PC-9 (cell line): ENCODE measurements at regions of chr2 and their contacts with region 1.

Region 1: DNA sequence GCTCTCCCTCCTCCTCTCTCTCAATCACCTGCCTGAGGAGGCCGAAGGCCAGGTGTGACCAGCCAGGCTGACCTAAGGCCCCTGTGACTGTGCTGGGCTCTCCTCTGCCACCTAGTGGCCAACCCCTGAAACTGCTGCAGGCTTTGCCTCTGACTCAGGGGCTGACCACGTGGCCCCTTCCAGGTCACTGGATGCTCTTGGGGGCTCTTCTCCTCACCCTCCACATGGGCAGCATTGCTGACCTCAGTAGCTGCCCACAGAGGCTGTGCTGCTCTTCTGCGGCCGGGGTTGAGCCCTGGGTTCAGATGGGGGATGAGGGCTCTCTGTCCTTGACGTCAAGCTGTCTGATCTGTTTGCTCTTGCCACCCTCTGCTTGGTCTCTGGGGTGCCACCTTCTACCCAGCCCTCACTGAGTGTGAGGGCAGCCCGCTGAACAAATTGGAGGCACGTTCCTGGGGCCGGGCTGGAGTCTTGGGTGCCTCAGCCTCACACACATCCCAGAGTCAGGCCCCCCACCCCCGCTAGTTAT is 122.7 kb downstream of the TWIST2 start:
- DNase-seq: peak in 1 of 2 experiments; percentile 84
- H3K4me3 ChIP-seq: no peak overlapping the region
- H3K27ac ChIP-seq: no peak overlapping the region
- H3K4me1 ChIP-seq: no peaks in the 10 kb centered on the region
- H3K27me3 ChIP-seq: peaks cover 45% of the 10 kb centered on the region
- CTCF ChIP-seq: peak; percentile 100

Region 2: GRCh38 chr2:238352361-238352760 is 618.3 kb before region 1 on chr2:
- CTCF ChIA-PET with region 1: no interaction called
- POLR2A ChIA-PET with region 1: no interaction called
- intact Hi-C with region 1: loop called (anchors 10 kb)
- DNase-seq: no peak
- H3K4me3 ChIP-seq: no peak overlapping the region
- H3K27ac ChIP-seq: no peak overlapping the region
- H3K4me1 ChIP-seq: 0 out of 2 replicates have a peak, but pooled peaks cover 4% of the 10 kb centered on the region
- H3K27me3 ChIP-seq: no peaks in the 10 kb centered on the region
- CTCF ChIP-seq: no peak

Region 3: DNA sequence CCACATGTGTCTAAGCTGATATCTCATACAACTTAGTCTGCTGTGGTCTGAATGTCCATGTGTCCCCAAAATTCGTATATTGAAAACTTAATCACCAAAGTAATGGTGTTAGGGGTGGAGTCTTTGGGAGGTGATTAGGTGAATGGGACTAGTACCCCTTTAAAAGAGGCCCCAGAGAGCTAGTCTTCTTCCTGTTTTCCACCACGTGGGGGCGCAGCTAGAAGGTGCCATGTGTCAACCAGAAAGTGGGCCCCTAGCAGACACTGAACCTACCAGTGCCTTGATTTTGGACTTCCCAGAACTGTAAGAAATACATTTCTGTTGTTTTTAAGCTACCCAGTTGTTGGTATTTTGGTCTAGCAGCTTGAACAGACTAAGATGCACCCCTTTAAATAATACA is 457.3 kb before region 1 on chr2:
- CTCF ChIA-PET with region 1: interaction called, 7 read pairs
- POLR2A ChIA-PET with region 1: no interaction called
- intact Hi-C with region 1: loop called (anchors 1 kb)
- DNase-seq: peak in 1 of 2 experiments; percentile 62
- H3K4me3 ChIP-seq: no peak overlapping the region
- H3K27ac ChIP-seq: no peak overlapping the region
- H3K4me1 ChIP-seq: no peaks in the 10 kb centered on the region
- H3K27me3 ChIP-seq: peaks cover 76% of the 10 kb centered on the region
- CTCF ChIP-seq: peak; percentile 77

Region 4: DNA sequence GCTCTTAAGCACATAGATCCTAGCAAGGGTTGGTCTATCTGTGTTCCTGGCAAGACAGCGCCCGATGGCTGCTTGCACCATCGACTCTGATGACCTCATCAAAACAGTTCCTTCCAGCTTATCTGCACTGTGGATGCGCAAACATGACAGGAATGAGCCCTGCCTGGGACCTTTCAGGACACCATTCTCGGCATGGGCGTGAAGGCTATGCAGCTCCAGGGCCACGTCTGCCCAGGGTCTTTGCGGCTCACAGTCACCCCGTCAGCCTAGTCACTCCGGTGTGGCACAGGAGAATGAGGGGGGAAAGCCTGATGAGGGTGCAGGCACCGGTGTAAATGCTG is 270.5 kb before region 1 on chr2:
- CTCF ChIA-PET with region 1: no interaction called
- POLR2A ChIA-PET with region 1: no interaction called
- intact Hi-C with region 1: no loop called
- DNase-seq: peak in 1 of 2 experiments; percentile 75
- H3K4me3 ChIP-seq: no peak overlapping the region
- H3K27ac ChIP-seq: no peak overlapping the region
- H3K4me1 ChIP-seq: no peaks in the 10 kb centered on the region
- H3K27me3 ChIP-seq: peaks cover 87% of the 10 kb centered on the region
- CTCF ChIP-seq: no peak

Region 5: DNA sequence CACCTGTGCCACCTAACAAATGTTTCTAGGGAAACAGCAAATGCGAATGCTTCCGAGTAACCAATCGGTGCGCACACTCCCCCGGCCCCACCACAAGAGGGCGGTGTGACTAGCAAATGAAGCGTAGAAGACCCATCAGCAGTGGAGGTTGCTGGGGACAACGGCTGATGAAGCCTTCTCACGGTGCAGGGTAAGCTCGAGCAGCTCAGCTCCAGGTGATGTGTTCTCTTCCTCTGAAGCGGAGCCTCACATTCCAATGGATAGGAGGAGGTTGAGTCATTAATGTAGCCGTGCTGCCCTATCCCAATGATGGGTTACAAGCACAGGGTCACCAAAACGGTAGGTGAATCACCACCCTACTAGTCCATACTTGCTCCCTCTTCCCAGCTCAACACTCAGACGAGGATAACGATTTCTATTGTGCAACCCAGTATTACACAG is 250.4 kb before region 1 on chr2:
- CTCF ChIA-PET with region 1: no interaction called
- POLR2A ChIA-PET with region 1: no interaction called
- intact Hi-C with region 1: loop called (anchors 1 kb)
- DNase-seq: peak; percentile 46 to 67
- H3K4me3 ChIP-seq: no peak overlapping the region
- H3K27ac ChIP-seq: no peak overlapping the region
- H3K4me1 ChIP-seq: no peaks in the 10 kb centered on the region
- H3K27me3 ChIP-seq: peaks cover 75% of the 10 kb centered on the region
- CTCF ChIP-seq: peak; percentile 82

Region 6: GRCh38 chr2:238864207-238865014 is 106.2 kb before region 1 on chr2:
- CTCF ChIA-PET with region 1: no interaction called
- POLR2A ChIA-PET with region 1: no interaction called
- intact Hi-C with region 1: loop called (anchors 2 kb)
- DNase-seq: peak; percentile 96 to 97
- H3K4me3 ChIP-seq: peak overlapping the region; percentile 29; the same call in 1 of the 2 replicates
- H3K27ac ChIP-seq: 0 out of 2 replicates have a peak overlapping the region, but pooled peaks have one; percentile 11
- H3K4me1 ChIP-seq: peaks cover 22% of the 10 kb centered on the region
- H3K27me3 ChIP-seq: no peaks in the 10 kb centered on the region; the same call in 1 of the 2 replicates
- CTCF ChIP-seq: no peak

Region 7: GRCh38 chr2:240528406-240529040 is 1557.9 kb after region 1 on chr2:
- CTCF ChIA-PET with region 1: no interaction called
- POLR2A ChIA-PET with region 1: no interaction called
- intact Hi-C with region 1: no loop called
- DNase-seq: no peak
- H3K4me3 ChIP-seq: no peak overlapping the region
- H3K27ac ChIP-seq: no peak overlapping the region
- H3K4me1 ChIP-seq: no peaks in the 10 kb centered on the region
- H3K27me3 ChIP-seq: no peaks in the 10 kb centered on the region
- CTCF ChIP-seq: no peak